ENCODE measurements at regions of chr12 and their contacts with region 1.

Region 1: GRCh38 chr12:96495841-96496545 is 6.6 kb downstream of the CFAP54 start:
- DNase-seq: no peak
- ATAC-seq: no peak
- H3K4me3 ChIP-seq: no peak overlapping the region
- H3K27ac ChIP-seq: peak overlapping the region in 4 of 10 donors; percentile 25 to 36 (median 27)
- H3K4me1 ChIP-seq: peaks cover 0 to 22% (median 7%) of the 10 kb centered on the region in 9 donors
- H3K27me3 ChIP-seq: no peaks in the 10 kb centered on the region
- CTCF ChIP-seq: no peak

Region 2: DNA sequence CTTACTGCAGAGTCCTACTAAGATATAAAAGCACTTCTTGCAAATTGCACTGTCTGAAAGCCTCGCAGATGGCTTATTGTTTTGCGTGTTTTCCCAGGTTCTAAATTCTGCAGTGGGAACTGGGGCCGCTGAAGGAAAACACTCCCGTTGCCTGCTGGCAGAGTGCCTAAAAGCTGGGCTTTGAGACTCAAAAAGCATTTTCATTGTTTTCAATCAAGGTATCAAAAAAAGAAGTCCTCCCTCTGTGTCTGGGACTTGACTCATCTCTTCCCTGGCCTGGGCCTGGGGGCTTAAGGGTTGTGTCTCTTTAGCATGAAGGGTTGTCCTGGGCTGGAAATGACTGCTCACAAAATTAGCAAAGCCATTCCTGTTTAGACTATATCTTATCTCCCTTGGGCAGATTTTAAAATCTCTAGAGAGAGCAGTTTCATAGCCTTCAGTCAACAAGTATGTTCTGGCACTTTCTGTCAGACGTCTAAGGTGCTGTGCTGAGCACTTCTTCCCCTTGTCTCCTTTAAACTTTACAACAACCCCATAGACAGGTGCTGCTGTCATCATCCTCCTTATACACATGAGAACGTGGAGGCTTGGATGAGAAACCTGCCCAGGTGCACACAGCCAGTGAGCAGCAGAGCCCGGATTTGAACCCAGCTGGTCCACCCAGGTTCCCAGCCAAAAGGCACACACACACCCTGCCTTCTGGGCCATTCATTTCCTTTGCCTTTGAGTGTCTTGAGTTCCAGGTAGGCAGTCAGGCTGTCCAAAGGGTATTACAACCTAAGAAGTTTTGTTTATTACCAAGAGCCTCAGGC is 270.7 kb before region 1 on chr12:
- intact Hi-C with region 1: loop called in 1 of 10 experiments (anchors 5 kb)
- DNase-seq: peak in 1 of 2 donors; percentile 81
- ATAC-seq: peak in 5 of 8 donors; percentile 16 to 51 (median 44)
- H3K4me3 ChIP-seq: no peak overlapping the region
- H3K27ac ChIP-seq: peak overlapping the region in 6 of 10 donors; percentile 13 to 67 (median 52)
- H3K4me1 ChIP-seq: peaks cover 0 to 86% (median 51%) of the 10 kb centered on the region in 9 donors
- H3K27me3 ChIP-seq: no peaks in the 10 kb centered on the region
- CTCF ChIP-seq: no peak